ENCODE measurements at regions of chr19 and their contacts with region 1.

Region 1: DNA sequence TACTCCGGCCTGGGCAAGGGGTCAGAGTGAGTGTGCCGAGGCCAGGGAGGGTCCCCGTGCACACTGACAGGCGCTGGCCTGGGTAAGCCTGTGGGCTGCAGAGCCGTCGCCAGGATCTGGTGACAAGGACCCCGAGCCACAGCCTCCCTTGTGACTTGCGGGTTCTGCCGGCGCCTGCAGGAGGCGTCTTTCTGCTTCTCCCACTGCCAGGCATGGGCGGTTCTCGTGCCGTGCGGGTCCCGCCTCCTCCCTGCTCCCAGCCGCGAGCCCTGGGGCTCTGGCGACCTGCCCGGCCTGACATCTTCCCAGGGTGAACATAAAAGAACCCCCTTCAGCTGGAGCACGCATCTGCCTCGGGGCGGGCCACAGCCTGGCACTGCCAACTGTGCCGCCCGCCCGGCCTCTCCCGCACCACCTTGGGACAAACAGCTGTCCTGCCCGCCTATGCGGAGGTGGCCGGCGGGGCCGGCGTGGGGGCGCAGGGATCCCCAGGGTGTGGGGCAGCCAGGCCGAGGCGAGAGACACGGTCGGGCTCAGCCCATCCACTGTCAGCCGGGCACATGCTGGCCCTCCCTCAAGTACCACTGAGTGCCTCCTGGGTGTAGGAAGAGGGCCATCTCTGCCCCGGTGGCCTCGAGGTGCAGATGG is 1.5 kb upstream of the HCN2 start:
- DNase-seq: peak; percentile 92
- H3K4me3 ChIP-seq: peak overlapping the region; percentile 32 to 36; a peak in 3 of 4 replicates
- H3K27ac ChIP-seq: peak overlapping the region; percentile 34 to 47; a peak in 2 of 4 replicates
- H3K4me1 ChIP-seq: peaks cover 4 to 23% of the 10 kb centered on the region in 2 experiments; a peak in 1 of 4 replicates
- H3K27me3 ChIP-seq: no peaks in the 10 kb centered on the region
- CTCF ChIP-seq: peak; percentile 72
- EP300 ChIP-seq: 0 out of 4 replicates have a peak, but pooled peaks of 1 of the 2 experiments have one; percentile 25
- RAD21 ChIP-seq: peak; percentile 60

Region 2: DNA sequence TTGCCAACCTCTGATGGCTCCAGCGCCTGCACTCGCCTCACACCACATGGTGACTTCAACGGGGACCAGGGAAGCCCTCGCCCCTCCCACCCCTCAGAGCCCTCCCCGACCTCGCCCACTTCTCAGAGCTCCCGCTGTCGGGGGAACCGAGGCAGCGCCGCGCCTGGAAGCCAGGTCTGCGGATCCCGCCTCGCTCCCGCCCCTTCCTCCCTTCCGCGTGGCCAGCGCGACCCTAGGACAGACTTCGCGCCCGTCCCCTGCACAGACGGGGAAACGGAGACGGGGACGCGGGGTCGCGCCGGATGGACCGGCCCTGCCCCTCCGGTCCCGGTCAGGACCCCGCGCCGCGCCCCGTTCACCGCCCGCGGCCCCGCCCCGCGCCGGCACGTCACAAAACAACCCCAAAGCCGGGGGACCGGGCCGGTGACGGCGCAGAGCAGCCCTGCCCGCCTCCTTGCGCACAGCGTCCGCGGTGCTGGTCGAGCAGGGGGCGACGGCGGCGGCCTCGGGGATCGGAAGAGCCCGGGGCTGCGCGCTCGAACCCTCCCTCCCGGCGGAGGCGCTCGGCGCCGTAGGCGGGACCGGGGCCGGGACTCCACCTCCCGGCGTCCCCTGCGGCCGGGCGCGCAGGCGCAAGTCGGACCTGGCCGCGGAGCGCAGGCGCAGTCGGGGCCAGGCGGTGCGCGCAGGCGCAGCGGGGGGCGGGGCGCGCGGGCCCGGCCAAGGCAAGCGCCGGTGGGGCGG is 57.0 kb before region 1 on chr19:
- CTCF ChIA-PET with region 1: interaction called, 12 read pairs
- POLR2A ChIA-PET with region 1: interaction called, 3 read pairs
- DNase-seq: peak; percentile 99
- H3K4me3 ChIP-seq: peak overlapping the region; percentile 73 to 75
- H3K27ac ChIP-seq: peak overlapping the region; percentile 80 to 95
- H3K4me1 ChIP-seq: peaks cover 11 to 19% of the 10 kb centered on the region in 2 experiments; a peak in 2 of 4 replicates
- H3K27me3 ChIP-seq: no peaks in the 10 kb centered on the region
- CTCF ChIP-seq: no peak
- EP300 ChIP-seq: no peak
- RAD21 ChIP-seq: no peak

Region 3: DNA sequence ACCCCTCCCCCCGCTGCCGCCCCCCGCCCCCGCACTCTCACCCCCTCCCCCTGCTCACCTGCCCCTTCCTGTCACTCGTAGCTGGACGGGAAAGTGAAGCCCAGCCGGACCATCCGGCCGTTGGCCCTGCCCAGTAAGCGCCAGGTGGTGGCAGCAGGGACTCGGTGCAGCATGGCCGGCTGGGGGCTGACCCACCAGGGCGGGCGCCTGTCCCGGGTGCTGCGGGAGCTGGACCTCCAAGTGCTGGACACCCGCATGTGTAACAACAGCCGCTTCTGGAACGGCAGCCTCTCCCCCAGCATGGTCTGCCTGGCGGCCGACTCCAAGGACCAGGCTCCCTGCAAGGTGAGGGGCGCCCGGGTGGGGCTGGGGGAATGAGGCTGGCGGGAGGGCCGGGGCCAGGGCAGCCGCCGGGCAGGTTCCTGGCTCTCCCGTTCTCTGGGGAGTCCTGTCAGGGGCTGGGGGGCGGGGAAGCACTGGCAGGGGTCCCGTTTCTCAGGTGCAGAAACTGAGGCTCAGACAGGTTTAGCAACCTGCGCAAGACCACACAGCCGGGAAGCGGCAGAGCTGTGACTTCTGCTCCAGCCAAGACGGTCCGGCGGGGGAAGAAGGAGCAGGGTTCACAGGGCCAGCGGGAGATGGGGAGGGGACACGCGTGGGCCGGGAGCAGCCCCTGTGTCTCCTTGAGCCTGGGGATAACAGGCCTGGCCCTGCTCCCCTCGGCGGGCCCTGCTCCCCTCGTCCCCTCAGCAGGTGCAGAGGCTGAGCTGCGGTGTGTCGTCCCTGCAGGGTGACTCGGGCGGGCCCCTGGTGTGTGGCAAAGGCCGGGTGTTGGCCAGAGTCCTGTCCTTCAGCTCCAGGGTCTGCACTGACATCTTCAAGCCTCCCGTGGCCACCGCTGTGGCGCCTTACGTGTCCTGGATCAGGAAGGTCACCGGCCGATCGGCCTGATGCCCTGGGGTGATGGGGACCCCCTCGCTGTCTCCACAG is 39.1 kb before region 1 on chr19:
- CTCF ChIA-PET with region 1: interaction called, 23 read pairs
- POLR2A ChIA-PET with region 1: no interaction called
- DNase-seq: peak; percentile 75
- H3K4me3 ChIP-seq: no peak overlapping the region
- H3K27ac ChIP-seq: no peak overlapping the region
- H3K4me1 ChIP-seq: peaks cover 0 to 4% of the 10 kb centered on the region in 2 experiments; a peak in 1 of 4 replicates
- H3K27me3 ChIP-seq: no peaks in the 10 kb centered on the region
- CTCF ChIP-seq: no peak
- EP300 ChIP-seq: no peak
- RAD21 ChIP-seq: peak; percentile 28

Region 4: DNA sequence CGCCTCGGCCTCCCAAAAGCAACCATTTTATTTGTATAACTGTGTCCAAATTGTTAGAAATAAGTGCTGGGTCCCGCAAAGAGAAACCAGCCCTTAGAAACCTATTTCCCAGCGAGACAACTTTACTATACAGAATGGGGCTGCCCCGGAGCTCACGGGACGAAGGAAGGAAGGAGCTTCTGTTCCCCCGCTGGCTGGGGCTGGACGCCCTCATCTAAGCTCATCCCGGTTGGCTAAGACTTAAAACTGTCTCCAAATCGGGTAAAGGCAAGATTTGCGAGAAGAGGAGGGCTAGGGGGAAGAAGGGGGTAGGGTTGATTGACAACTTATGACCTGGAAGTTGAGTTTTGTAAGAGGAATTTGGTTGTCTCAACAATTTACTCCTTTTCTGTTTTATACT is 28.1 kb before region 1 on chr19:
- CTCF ChIA-PET with region 1: no interaction called
- POLR2A ChIA-PET with region 1: no interaction called
- DNase-seq: no peak
- H3K4me3 ChIP-seq: no peak overlapping the region
- H3K27ac ChIP-seq: no peak overlapping the region
- H3K4me1 ChIP-seq: no peaks in the 10 kb centered on the region; a peak in 1 of 4 replicates
- H3K27me3 ChIP-seq: no peaks in the 10 kb centered on the region
- CTCF ChIP-seq: no peak
- EP300 ChIP-seq: no peak
- RAD21 ChIP-seq: no peak

Region 5: DNA sequence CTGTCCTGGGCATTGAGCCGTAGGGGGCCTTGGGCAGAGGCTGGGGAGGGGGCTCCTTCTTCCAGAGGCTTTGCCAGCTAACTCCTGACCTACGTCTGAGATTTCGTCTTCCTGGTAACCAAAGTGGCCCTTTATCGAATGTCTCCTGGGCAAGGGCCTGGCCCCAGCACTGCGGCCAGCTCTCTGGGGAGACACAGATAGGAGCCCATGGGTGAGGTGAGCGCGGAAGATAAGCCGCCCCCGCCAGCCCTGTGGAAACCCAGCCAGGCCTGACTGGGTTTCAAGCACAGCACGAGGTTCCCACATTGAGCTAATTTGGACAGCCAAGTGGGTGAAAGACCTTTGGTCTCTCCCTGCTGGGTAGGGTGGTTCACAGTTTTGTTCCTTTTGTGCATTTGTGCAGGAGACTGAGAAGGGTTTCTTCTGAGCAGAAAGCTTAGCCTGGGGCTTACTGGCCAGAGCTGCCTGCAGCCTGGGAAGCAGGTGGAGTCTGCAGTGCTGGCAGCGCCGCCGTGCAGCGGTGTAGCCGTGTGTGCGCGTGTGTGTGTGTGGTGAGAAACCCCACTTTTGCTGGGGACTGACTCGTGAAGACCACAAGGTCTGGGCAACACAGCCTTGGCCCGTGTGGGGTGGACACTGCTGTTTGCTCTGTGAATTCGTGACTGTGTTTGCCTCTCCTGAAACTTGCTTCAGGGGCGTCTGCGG is 13.4 kb before region 1 on chr19:
- CTCF ChIA-PET with region 1: interaction called, 32 read pairs
- POLR2A ChIA-PET with region 1: interaction called, 6 read pairs
- DNase-seq: no peak
- H3K4me3 ChIP-seq: peak overlapping the region; percentile 38 to 53
- H3K27ac ChIP-seq: peak overlapping the region; percentile 44 to 53; a peak in 3 of 4 replicates
- H3K4me1 ChIP-seq: peaks cover 24 to 32% of the 10 kb centered on the region in 2 experiments; a peak in 3 of 4 replicates
- H3K27me3 ChIP-seq: no peaks in the 10 kb centered on the region
- CTCF ChIP-seq: no peak
- EP300 ChIP-seq: no peak
- RAD21 ChIP-seq: no peak

Region 6: GRCh38 chr19:628159-628558 is 39.9 kb after region 1 on chr19:
- CTCF ChIA-PET with region 1: interaction called, 24 read pairs
- POLR2A ChIA-PET with region 1: no interaction called
- DNase-seq: peak; percentile 76
- H3K4me3 ChIP-seq: no peak overlapping the region; a peak in 1 of 4 replicates
- H3K27ac ChIP-seq: no peak overlapping the region
- H3K4me1 ChIP-seq: peaks cover 0 to 16% of the 10 kb centered on the region in 2 experiments; a peak in 1 of 4 replicates
- H3K27me3 ChIP-seq: no peaks in the 10 kb centered on the region
- CTCF ChIP-seq: peak; percentile 54
- EP300 ChIP-seq: no peak
- RAD21 ChIP-seq: peak; percentile 39

Region 7: DNA sequence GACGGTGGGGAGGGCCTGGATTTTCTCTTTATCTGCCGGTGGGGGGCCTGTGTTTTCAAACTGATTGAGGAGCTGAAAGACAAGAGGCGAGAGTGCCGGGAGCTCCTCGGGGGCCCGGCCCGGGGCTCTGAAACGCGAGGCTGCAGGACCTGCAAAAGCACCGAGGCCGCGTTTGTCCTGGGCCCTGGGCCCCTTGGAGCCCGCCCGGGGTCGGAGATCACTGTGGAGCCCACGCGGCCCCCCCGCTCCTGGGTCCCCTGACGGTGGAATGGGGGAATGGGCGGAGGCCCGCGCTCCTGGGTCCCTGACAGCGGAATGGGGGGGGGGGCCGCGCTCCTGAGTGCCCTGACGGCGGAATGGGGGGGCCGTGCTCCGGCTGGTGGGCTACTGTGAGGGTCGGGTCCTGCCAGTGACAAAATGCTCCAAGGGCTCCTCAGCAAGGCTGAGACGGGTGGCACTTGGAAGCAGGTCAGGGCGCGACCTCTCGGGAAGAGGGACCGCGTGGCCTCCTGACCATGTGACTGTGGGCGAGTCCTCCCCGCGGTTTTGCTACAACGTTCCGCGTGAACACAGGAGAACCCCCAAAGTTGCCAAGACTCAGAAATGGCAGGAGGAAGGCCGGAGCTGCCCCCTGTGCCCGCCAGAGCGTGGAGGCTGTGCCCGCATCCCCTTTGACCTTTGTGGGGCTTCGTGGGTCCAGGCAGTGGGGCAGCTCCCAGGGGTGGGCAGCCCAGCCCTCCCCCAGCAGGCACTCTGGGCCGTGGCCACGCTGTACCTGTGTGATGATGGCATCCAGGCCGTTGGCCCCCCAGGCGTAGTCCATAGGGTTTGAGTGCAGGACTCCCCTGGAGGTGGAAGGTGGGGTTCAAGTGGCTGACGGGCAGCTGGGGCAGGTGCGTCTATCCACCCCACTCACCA is 60.9 kb after region 1 on chr19:
- CTCF ChIA-PET with region 1: no interaction called
- POLR2A ChIA-PET with region 1: no interaction called
- DNase-seq: no peak
- H3K4me3 ChIP-seq: no peak overlapping the region
- H3K27ac ChIP-seq: no peak overlapping the region
- H3K4me1 ChIP-seq: no peaks in the 10 kb centered on the region
- H3K27me3 ChIP-seq: no peaks in the 10 kb centered on the region
- CTCF ChIP-seq: no peak
- EP300 ChIP-seq: no peak
- RAD21 ChIP-seq: no peak

Region 8: GRCh38 chr19:756232-756631 is 168.0 kb after region 1 on chr19:
- CTCF ChIA-PET with region 1: no interaction called
- POLR2A ChIA-PET with region 1: no interaction called
- DNase-seq: peak; percentile 67
- H3K4me3 ChIP-seq: no peak overlapping the region
- H3K27ac ChIP-seq: no peak overlapping the region
- H3K4me1 ChIP-seq: no peaks in the 10 kb centered on the region
- H3K27me3 ChIP-seq: no peaks in the 10 kb centered on the region
- CTCF ChIP-seq: no peak
- EP300 ChIP-seq: no peak
- RAD21 ChIP-seq: no peak

Measured in SK-N-SH (cell line).